HCT116 (cell line): ENCODE measurements at regions of chr6 and their contacts with region 1.

Region 1: GRCh38 chr6:43143235-43144124 is 27.6 kb upstream of the SRF start:
- DNase-seq: peak; percentile 24
- ATAC-seq: peak; percentile 99
- H3K4me3 ChIP-seq: no peak overlapping the region
- H3K27ac ChIP-seq: no peak overlapping the region
- H3K4me1 ChIP-seq: peaks cover 3 to 9% of the 10 kb centered on the region in 2 experiments; a peak in 1 of 4 replicates
- H3K27me3 ChIP-seq: no peaks in the 10 kb centered on the region
- CTCF ChIP-seq: peak; percentile 92 to 96 (median 94)
- POLR2A ChIP-seq: no peak
- RAD21 ChIP-seq: peak; percentile 98

Region 2: GRCh38 chr6:42963855-42964605 is 179.4 kb before region 1 on chr6:
- CTCF ChIA-PET with region 1: interaction called, 9 read pairs
- POLR2A ChIA-PET with region 1: no interaction called
- RAD21 ChIA-PET with region 1: no interaction called
- intact Hi-C with region 1: loop called (anchors 5 kb)
- DNase-seq: no peak
- ATAC-seq: peak; percentile 77
- H3K4me3 ChIP-seq: no peak overlapping the region
- H3K27ac ChIP-seq: no peak overlapping the region
- H3K4me1 ChIP-seq: peaks cover 10 to 17% of the 10 kb centered on the region in 2 experiments
- H3K27me3 ChIP-seq: no peaks in the 10 kb centered on the region
- CTCF ChIP-seq: peak; percentile 42 to 52 (median 47); a peak in 5 of 6 replicates
- POLR2A ChIP-seq: no peak
- RAD21 ChIP-seq: peak; percentile 75

Region 3: DNA sequence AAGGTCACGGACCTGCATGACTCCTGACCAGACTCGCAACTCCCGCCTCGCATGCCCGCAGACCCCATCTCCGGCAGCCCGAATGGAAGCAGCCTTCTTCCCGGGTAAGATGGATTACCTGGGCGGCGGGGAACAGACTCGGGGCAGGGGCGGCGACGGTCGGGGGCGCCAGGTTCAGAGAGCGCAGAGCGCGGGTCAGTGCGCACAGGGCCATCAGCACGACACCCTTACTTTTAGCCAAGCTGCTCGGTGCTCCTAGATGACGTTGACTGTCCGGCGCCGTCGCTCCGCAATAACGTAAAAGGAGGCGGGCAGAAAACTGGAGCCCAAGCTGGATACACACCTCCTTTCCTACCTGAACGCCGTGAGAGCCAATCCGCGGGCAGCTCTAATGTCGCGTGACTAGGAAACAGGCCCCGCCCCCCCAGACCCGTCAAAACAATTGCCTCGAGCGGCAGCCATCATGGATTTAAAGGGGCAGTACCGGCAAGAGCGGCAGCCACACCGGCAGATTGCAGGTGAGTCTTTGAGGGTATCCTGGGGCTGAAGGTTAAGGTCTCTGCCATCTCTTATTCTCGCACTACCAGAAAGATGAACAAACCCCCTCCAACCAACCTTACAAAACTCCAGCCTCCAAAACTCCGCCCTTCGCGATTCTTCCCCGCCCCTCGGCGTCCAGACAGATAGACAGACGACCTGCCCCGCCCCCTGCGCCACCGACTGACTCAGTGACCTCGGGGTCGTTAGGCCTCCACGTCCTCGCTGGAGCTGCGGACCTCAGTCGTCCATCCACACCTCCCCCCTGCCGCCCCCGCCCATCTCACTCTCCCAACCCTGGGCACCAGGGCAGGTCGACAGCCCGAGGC is 84.1 kb before region 1 on chr6 and contains the starts of genes KLC4 and MRPL2:
- CTCF ChIA-PET with region 1: interaction called, 5 read pairs
- POLR2A ChIA-PET with region 1: interaction called, 7 read pairs
- RAD21 ChIA-PET with region 1: interaction called, 3 to 5 read pairs
- intact Hi-C with region 1: loop called (anchors 5 kb)
- DNase-seq: peak; percentile 97
- ATAC-seq: peak; percentile 96
- H3K4me3 ChIP-seq: peak within 1 kb of the TSS; percentile 89
- H3K27ac ChIP-seq: peak within 1 kb of the TSS; percentile 65
- H3K4me1 ChIP-seq: peaks cover 10 to 25% of the 10 kb centered on the region in 2 experiments; a peak in 3 of 4 replicates
- H3K27me3 ChIP-seq: no peaks in the 10 kb centered on the region
- CTCF ChIP-seq: no peak
- POLR2A ChIP-seq: no peak
- RAD21 ChIP-seq: no peak
- total RNA-seq, gene KLC4: 16.2 TPM
- total RNA-seq, gene MRPL2: 123 TPM

Region 4: DNA sequence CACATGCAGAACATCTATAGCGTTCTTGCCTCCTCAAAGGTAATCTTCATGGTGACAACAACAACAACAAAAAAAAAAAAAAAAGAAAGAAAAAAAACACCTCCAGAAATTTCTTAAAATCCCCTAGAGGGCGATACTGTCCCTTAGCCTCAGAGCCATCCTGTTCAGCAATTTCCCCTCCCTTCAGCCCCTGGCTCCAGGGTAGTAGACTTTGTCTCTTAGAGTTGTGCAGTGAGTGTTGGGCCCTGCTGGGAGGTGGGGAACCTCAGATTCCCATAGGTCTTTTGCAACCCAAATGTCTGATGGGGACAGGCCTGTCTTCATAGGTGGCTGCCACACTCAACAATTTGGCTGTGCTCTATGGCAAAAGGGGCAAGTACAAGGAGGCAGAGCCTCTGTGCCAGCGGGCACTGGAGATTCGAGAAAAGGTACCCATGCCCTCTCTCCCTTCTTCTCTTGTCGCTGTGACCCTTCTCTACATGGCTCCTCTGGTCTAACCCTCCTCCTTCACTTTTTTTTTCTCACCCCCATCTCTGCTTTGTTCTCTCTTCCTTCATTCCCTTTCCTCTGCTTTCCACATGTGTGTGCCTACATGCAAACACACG is 73.3 kb before region 1 on chr6:
- CTCF ChIA-PET with region 1: interaction called, 10 read pairs
- POLR2A ChIA-PET with region 1: no interaction called
- RAD21 ChIA-PET with region 1: no interaction called
- intact Hi-C with region 1: loop called (anchors 1 kb)
- DNase-seq: peak; percentile 49
- ATAC-seq: peak; percentile 89
- H3K4me3 ChIP-seq: no peak overlapping the region
- H3K27ac ChIP-seq: no peak overlapping the region
- H3K4me1 ChIP-seq: peaks cover 3 to 4% of the 10 kb centered on the region in 2 experiments; a peak in 2 of 4 replicates
- H3K27me3 ChIP-seq: no peaks in the 10 kb centered on the region
- CTCF ChIP-seq: peak; percentile 57 to 84 (median 74)
- POLR2A ChIP-seq: no peak
- RAD21 ChIP-seq: peak; percentile 79

Region 5: GRCh38 chr6:43075670-43076463 is 67.6 kb before region 1 on chr6 and contains the start of gene PTK7:
- CTCF ChIA-PET with region 1: interaction called, 10 read pairs
- POLR2A ChIA-PET with region 1: no interaction called
- RAD21 ChIA-PET with region 1: no interaction called
- intact Hi-C with region 1: no loop called
- DNase-seq: no peak
- ATAC-seq: peak; percentile 80
- H3K4me3 ChIP-seq: peak within 1 kb of the TSS; percentile 89 to 98
- H3K27ac ChIP-seq: peak within 1 kb of the TSS; percentile 86
- H3K4me1 ChIP-seq: peaks cover 17 to 27% of the 10 kb centered on the region in 2 experiments
- H3K27me3 ChIP-seq: no peaks in the 10 kb centered on the region
- CTCF ChIP-seq: no peak
- POLR2A ChIP-seq: no peak
- RAD21 ChIP-seq: no peak
- total RNA-seq, gene PTK7: 105 TPM

Region 6: GRCh38 chr6:43105538-43106220 is 37.8 kb before region 1 on chr6:
- CTCF ChIA-PET with region 1: no interaction called
- POLR2A ChIA-PET with region 1: no interaction called
- RAD21 ChIA-PET with region 1: no interaction called
- intact Hi-C with region 1: no loop called
- DNase-seq: no peak
- ATAC-seq: no peak
- H3K4me3 ChIP-seq: no peak overlapping the region
- H3K27ac ChIP-seq: no peak overlapping the region
- H3K4me1 ChIP-seq: peaks cover 8 to 13% of the 10 kb centered on the region in 2 experiments; a peak in 2 of 4 replicates
- H3K27me3 ChIP-seq: no peaks in the 10 kb centered on the region
- CTCF ChIP-seq: no peak
- POLR2A ChIP-seq: no peak
- RAD21 ChIP-seq: no peak